Activated naive CD4-positive, alpha-beta T cell treated with anti-CD3 and anti-CD28 coated beads for 36 hours (primary cell): ENCODE measurements at regions of chr3 and their contacts with region 1.

Region 1: DNA sequence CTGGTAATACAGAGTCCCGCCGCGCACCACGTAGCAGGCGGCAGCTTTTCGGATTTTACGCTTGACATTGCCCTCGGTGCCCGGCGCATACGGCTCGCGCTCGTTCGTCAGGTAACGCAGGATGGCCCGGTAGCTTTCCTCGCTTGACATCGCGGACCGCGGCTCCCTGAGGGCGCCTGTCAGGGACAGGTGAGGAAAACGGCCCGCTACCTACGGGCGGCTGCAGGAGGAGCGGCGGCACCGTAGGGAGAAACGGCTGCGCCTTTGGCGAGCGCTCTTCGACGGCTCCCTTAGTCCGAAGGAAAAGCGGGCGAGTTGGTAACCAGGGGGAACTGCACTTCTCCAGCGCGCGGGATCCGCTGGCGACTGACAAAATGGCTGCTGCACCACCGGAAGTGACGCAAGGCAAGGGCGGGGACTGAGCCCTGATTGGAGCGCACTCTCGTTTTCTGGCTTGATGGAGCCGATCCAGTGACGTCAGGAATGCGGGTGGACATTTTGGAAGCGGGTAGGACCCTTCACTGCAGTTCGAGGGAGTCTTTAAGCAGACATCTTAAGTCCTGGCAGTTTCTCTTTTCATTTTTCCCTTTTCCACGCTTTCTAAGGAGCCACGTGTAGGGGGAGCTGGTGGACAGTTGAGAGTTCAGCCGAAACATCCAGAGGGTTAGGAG is at the start of gene ZBTB11:
- DNase-seq: peak; percentile 100
- H3K4me3 Mint-ChIP-seq: peak within 1 kb of the TSS; percentile 87
- H3K27ac Mint-ChIP-seq: peak within 1 kb of the TSS; percentile 95
- H3K4me1 Mint-ChIP-seq: peaks cover 54% of the 10 kb centered on the region
- H3K27me3 Mint-ChIP-seq: no peaks in the 10 kb centered on the region
- total RNA-seq, gene ZBTB11: 31.2 to 31.7 TPM

Region 2: DNA sequence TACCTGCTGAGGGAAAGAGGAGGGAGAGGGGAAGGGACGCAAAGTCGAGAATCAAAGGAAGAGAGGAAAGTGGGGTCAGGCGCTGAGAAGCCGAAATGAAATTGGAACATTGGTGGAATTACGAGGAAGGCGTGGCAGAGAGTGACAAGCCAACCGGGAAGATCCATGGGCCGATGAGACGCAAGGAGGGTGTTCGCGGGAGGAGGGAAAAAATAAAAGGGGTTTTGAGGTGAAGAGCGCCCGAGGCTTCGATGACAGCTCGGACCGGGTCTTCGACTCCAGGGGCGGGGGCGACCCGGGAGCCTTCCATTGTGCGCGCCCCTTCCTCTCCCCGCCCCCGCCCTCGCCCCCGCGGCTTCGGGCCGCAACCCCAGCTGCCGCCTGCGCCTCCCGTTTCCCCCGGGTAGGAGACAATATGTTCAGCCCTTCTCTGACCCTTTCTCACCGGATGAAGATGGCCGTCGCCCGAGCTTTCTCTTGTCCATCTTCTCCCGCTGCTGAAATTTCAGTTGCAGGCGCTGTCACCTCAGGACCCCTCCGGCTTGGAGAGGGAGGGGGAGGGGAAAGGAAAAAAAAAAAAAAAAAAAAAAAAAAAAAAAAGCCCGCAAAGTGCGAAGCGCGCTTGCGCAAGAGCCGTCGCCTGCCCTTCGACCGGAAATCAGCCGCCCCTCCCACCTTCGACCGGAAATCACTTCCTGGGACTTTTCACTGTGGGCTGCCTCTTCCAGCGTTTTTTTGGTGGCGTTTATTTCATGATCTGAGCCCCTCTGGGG is 164.1 kb before region 1 on chr3 and contains the start of gene SENP7:
- CTCF ChIA-PET with region 1: interaction called, 3 read pairs
- intact Hi-C with region 1: loop called (anchors 1 kb)
- DNase-seq: peak; percentile 89
- H3K4me3 Mint-ChIP-seq: peak within 1 kb of the TSS; percentile 97
- H3K27ac Mint-ChIP-seq: peak within 1 kb of the TSS; percentile 97
- H3K4me1 Mint-ChIP-seq: peaks cover 50% of the 10 kb centered on the region
- H3K27me3 Mint-ChIP-seq: no peaks in the 10 kb centered on the region
- total RNA-seq, gene SENP7: 16.1 to 16.8 TPM

Region 3: GRCh38 chr3:102336130-102336529 is 659.2 kb after region 1 on chr3:
- CTCF ChIA-PET with region 1: no interaction called
- intact Hi-C with region 1: no loop called
- DNase-seq: no peak
- H3K4me3 Mint-ChIP-seq: no peak overlapping the region
- H3K27ac Mint-ChIP-seq: no peak overlapping the region
- H3K4me1 Mint-ChIP-seq: no peaks in the 10 kb centered on the region
- H3K27me3 Mint-ChIP-seq: peaks cover 6% of the 10 kb centered on the region